Motor neuron (in vitro differentiated cells): ENCODE measurements at regions of chr11 and their contacts with region 1.

Region 1: DNA sequence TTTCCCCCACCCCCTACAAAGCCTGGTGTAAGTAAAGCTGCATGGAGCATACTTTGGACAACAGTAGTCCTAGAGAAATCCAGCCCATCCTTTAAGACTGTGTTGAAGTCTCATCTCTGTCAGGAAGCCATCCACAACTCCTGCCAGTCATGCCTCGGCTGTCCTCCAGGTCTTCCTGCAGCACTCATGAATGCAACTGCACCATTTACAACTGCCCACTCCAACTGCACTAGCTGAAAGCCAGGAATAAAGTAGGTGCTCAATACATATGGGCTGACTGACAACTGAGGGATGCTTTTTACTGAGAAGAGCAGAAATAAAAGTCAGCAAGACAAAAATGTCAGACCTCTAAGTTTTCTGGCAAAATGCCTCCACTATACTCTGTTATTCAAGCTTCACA is 27.4 kb downstream of the IL18BP start:
- ATAC-seq: no peak
- H3K4me3 ChIP-seq: no peak overlapping the region
- H3K27ac ChIP-seq: no peak overlapping the region
- H3K4me1 ChIP-seq: peaks cover 0 to 3% of the 10 kb centered on the region in 2 donors

Region 2: GRCh38 chr11:72080256-72080974 is 54.3 kb after region 1 on chr11 and contains the starts of genes LRRC51 and NUMA1:
- in situ Hi-C with region 1: loop called in 1 of 9 experiments (anchors 10 kb)
- ATAC-seq: peak; percentile 89 to 96 (median 95)
- H3K4me3 ChIP-seq: peak within 1 kb of the TSS; percentile 52 to 68 (median 54)
- H3K27ac ChIP-seq: peak within 1 kb of the TSS; percentile 73 to 79
- H3K4me1 ChIP-seq: peaks cover 5 to 6% of the 10 kb centered on the region in 2 donors
- total RNA-seq, gene LRRC51: 3.6 to 39.0 (median 12.6) TPM
- total RNA-seq, gene NUMA1: 76.0 to 217 (median 95.6) TPM

Region 3: GRCh38 chr11:72091005-72091691 is 65.1 kb after region 1 on chr11:
- in situ Hi-C with region 1: loop called in 3 of 9 experiments (anchors 10 kb)
- ATAC-seq: peak; percentile 67 to 95 (median 82)
- H3K4me3 ChIP-seq: no peak overlapping the region
- H3K27ac ChIP-seq: no peak overlapping the region
- H3K4me1 ChIP-seq: peaks cover 0 to 2% of the 10 kb centered on the region in 2 donors